K562 (cell line): ENCODE measurements at regions of chr4 and their contacts with region 1.

Region 1: DNA sequence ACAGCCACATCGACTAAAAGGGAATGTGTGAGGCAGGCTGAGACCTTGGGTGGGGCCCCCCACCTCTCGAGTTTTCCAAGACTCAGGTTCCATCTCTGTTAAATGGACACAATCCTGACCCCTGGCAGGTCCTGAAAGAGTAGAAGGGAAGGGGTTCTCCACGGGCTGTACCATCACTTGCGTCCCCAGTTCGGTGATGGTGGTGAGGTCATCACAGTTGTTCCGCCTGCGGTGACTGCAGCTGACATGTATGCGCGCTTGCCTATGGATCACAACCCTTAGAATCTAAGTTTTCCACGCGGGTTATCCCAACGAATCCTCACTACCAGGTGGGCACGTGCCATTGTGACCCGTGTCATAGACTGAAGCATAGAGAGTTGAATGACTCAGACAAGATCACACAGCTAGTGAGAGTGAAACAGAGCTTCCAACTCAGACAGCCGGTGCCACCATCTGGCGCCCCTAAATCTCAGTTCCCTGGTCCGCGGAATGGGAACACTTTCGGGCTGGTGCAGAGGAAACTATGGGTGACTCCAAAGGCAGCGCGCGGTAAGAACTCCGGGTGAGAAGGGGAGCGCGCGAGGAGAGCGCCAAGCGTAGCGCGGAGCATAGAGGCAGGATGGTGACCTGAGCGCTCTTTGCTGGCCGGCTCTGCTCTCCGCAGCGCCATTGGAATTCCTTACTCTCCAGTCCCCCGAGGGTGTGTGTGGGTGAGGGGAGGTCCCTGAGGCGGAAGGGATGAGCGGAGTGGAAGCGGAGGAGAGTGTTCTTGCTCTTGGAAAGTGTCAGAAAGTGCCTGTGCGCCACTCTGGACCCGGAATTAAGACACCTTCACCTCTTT is 10.5 kb downstream of the MSX1 start:
- DNase-seq: no peak
- ATAC-seq: no peak
- H3K4me3 ChIP-seq: no peak overlapping the region
- H3K27ac ChIP-seq: no peak overlapping the region
- H3K4me1 ChIP-seq: peaks cover 0 to 6% of the 10 kb centered on the region in 2 experiments; a peak in 2 of 5 replicates
- H3K27me3 ChIP-seq: peaks cover 65 to 96% of the 10 kb centered on the region in 2 experiments
- CTCF ChIP-seq: no peak
- EP300 ChIP-seq: no peak
- POLR2A ChIP-seq: no peak
- RAD21 ChIP-seq: no peak

Region 2: GRCh38 chr4:4677556-4678522 is 192.1 kb before region 1 on chr4:
- CTCF ChIA-PET with region 1: no interaction called
- POLR2A ChIA-PET with region 1: no interaction called
- in situ Hi-C with region 1: no loop called
- intact Hi-C with region 1: loop called (anchors 10 kb)
- DNase-seq: peak; percentile 27 to 40 (median 34)
- ATAC-seq: peak; percentile 82
- H3K4me3 ChIP-seq: no peak overlapping the region
- H3K27ac ChIP-seq: no peak overlapping the region
- H3K4me1 ChIP-seq: peaks cover 0 to 5% of the 10 kb centered on the region in 2 experiments; a peak in 2 of 5 replicates
- H3K27me3 ChIP-seq: peaks cover 3 to 8% of the 10 kb centered on the region in 2 experiments; a peak in 3 of 5 replicates
- CTCF ChIP-seq: peak; percentile 50 to 65 (median 64)
- EP300 ChIP-seq: no peak
- POLR2A ChIP-seq: no peak
- RAD21 ChIP-seq: peak; percentile 31 to 57; a peak in 3 of 4 replicates

Region 3: DNA sequence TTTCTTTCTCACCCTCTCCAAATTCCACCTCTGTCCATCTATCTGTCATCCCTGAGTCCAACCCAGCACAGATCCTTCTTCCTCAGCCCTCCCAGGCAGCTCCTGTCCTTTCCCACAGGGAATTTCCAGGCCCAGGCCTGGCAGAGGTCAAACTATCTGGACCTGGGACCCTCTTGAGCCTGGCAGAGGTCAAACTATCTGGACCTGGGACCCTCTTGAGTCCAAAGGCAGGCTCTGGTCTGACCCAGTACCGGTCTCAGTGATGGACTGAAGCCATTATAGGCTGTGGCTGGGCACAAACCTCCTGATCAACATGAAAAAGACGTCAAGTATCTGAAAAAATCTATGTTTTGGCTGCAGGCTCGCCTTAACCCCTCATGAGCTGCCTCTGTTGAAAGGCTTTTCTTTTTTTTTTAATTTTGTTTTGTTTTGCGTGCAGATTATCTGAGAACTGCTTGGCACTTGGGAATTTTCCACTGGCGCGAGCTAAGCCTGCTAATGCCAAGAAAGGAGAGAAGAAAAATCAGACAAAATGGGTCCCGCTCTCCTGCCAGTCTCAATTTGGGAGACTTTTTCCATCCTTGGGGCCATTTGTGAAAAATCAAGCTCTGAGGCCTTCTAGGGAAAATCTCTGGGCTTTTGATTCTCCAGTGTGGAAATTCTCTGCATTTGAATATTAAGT is 20.8 kb after region 1 on chr4:
- CTCF ChIA-PET with region 1: no interaction called
- POLR2A ChIA-PET with region 1: no interaction called
- in situ Hi-C with region 1: no loop called
- intact Hi-C with region 1: no loop called
- DNase-seq: no peak
- ATAC-seq: no peak
- H3K4me3 ChIP-seq: no peak overlapping the region
- H3K27ac ChIP-seq: no peak overlapping the region
- H3K4me1 ChIP-seq: no peaks in the 10 kb centered on the region
- H3K27me3 ChIP-seq: peaks cover 9 to 25% of the 10 kb centered on the region in 2 experiments; a peak in 4 of 5 replicates
- CTCF ChIP-seq: no peak
- EP300 ChIP-seq: no peak
- POLR2A ChIP-seq: no peak
- RAD21 ChIP-seq: no peak